ENCODE measurements at regions of chr7 and their contacts with region 1.

Region 1: DNA sequence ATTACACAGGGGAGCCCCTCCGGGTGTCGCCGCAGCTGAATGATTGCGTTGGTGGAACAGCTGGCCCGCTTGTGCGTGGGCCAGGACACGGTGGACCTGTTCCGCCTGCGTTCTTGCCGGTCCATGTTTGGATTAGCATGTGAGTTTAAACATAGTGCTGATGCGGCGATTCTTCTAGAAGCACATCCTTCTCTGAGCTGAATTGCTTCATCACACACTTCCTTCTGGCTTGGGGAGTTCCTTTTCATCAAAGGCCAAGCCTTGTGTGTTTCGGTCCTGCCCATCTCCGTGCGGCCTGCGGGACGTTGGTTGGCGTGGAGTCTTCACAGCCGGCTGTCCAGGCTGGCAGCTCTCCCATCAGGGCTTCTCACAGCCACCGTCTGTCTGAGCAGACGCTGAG is 45.5 kb upstream of the SLC29A4 start:
- DNase-seq: no peak
- ATAC-seq: no peak
- H3K4me3 ChIP-seq: no peak overlapping the region
- H3K27ac ChIP-seq: no peak overlapping the region
- H3K4me1 ChIP-seq: peaks cover 50% of the 10 kb centered on the region
- H3K27me3 ChIP-seq: peaks cover 0 to 1% of the 10 kb centered on the region in 2 experiments; a peak in 1 of 4 replicates
- CTCF ChIP-seq: no peak
- EP300 ChIP-seq: no peak
- POLR2A ChIP-seq: no peak
- RAD21 ChIP-seq: no peak

Region 2: DNA sequence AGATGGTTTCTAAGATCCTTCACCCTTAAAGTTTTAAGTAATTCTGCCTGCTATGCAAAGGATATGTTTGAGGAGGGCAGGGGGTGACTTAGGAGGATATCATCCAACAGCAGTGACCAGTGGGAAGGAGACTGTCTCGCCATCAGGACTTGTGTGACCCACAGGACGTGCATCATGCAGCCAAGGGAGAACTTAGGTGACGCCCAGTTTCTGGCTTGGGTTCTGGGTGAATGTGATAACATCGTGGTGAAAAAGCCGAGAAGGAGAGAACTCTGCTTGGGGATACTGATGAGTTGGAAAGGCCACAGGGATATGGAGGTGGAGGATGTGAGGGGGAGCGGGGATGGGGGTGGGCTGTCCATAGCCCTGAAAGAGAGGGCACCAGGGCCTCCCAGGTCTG is 43.4 kb before region 1 on chr7:
- CTCF ChIA-PET with region 1: interaction called, 8 read pairs
- POLR2A ChIA-PET with region 1: interaction called, 3 read pairs
- RAD21 ChIA-PET with region 1: interaction called, 13 read pairs
- SMC1A ChIA-PET with region 1: interaction called, 12 read pairs
- in situ Hi-C with region 1: no loop called
- intact Hi-C with region 1: loop called (anchors 2 kb)
- DNase-seq: no peak
- ATAC-seq: no peak
- H3K4me3 ChIP-seq: peak overlapping the region; percentile 16; the same call in 1 of the 2 replicates
- H3K27ac ChIP-seq: no peak overlapping the region
- H3K4me1 ChIP-seq: no peaks in the 10 kb centered on the region; the same call in 1 of the 2 replicates
- H3K27me3 ChIP-seq: no peaks in the 10 kb centered on the region
- CTCF ChIP-seq: no peak
- EP300 ChIP-seq: no peak
- POLR2A ChIP-seq: no peak
- RAD21 ChIP-seq: no peak

Region 3: GRCh38 chr7:5284304-5285281 is 47.3 kb after region 1 on chr7:
- CTCF ChIA-PET with region 1: interaction called, 18 read pairs
- POLR2A ChIA-PET with region 1: interaction called, 3 read pairs
- RAD21 ChIA-PET with region 1: interaction called, 12 read pairs
- SMC1A ChIA-PET with region 1: interaction called, 3 read pairs
- in situ Hi-C with region 1: no loop called
- intact Hi-C with region 1: no loop called
- DNase-seq: peak; percentile 4
- ATAC-seq: peak; percentile 85
- H3K4me3 ChIP-seq: no peak overlapping the region
- H3K27ac ChIP-seq: no peak overlapping the region
- H3K4me1 ChIP-seq: no peaks in the 10 kb centered on the region
- H3K27me3 ChIP-seq: no peaks in the 10 kb centered on the region; a peak in 1 of 4 replicates
- CTCF ChIP-seq: peak; percentile 33 to 51 (median 46); a peak in 4 of 6 replicates
- EP300 ChIP-seq: no peak
- POLR2A ChIP-seq: no peak
- RAD21 ChIP-seq: peak; percentile 67

Region 4: DNA sequence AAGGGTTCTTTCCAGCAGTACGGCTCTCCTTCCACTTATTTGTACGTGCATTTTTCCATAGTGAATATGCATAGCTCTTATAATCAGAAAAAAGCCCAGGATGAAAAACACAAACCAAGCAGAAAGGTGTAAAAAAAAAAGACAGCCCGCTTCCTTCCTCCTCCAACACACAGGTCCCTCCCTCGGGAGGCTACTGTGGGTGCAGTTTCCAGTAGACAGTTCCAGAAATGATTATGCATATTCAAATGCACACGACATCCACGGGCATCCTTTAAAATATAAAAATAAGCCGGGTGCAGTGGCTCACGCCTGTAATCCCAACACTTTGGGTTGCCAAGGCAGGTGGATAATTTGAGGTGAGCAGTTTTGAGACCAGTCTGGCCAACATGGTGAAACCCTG is 126.4 kb after region 1 on chr7:
- CTCF ChIA-PET with region 1: interaction called, 46 read pairs
- POLR2A ChIA-PET with region 1: interaction called, 4 read pairs
- RAD21 ChIA-PET with region 1: interaction called, 21 read pairs
- SMC1A ChIA-PET with region 1: interaction called, 9 read pairs
- in situ Hi-C with region 1: no loop called
- intact Hi-C with region 1: loop called (anchors 1 kb)
- DNase-seq: no peak
- ATAC-seq: peak; percentile 38; the same call in 2 of the 3 replicates
- H3K4me3 ChIP-seq: peak overlapping the region; percentile 16; the same call in 1 of the 2 replicates
- H3K27ac ChIP-seq: no peak overlapping the region
- H3K4me1 ChIP-seq: peaks cover 16% of the 10 kb centered on the region
- H3K27me3 ChIP-seq: no peaks in the 10 kb centered on the region
- CTCF ChIP-seq: no peak
- EP300 ChIP-seq: no peak
- POLR2A ChIP-seq: no peak
- RAD21 ChIP-seq: no peak

Region 5: DNA sequence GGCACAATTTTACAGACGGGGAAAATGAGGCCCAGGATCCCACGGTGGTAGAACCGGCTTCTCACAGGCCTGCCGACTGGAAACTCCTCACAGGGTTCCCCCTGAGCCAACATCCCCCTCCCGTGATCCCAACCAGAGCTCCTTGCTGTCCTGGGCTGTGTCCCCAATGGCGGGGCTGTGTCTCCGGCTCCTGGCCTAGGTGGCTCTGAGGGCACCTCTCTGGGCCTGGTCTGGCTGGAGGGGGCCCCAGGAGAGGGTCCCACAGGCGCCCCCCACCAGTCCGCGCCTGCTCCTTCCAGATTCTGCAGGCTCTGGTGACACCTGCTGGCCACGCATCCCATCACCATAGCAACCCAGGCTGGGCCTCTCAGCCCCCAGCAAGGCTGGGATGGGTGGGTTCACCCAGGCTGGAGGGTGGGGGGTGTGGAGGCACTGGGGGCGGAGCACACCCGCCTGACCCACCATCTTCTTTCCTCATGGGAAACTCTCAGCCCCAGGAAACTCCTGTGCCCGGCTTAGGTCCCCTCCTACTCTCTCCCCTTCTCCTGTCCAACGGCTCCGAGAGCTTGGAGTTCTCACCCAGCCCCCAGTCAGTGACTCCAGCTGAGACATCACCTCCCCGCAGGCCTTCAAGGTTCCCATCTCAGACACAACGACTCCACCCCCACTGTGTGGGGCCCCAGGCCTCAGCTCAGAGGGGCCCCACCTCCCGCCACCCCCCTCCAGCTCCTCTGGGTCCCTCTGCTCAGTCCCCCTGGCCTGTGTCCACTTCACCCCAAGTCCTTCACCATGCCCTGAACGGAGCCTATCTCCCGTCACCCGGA is 213.5 kb after region 1 on chr7:
- CTCF ChIA-PET with region 1: interaction called, 68 read pairs
- POLR2A ChIA-PET with region 1: no interaction called
- RAD21 ChIA-PET with region 1: interaction called, 45 read pairs
- SMC1A ChIA-PET with region 1: interaction called, 22 read pairs
- in situ Hi-C with region 1: no loop called
- intact Hi-C with region 1: loop called (anchors 1 kb)
- DNase-seq: no peak
- ATAC-seq: peak; percentile 92
- H3K4me3 ChIP-seq: no peak overlapping the region
- H3K27ac ChIP-seq: no peak overlapping the region
- H3K4me1 ChIP-seq: no peaks in the 10 kb centered on the region
- H3K27me3 ChIP-seq: no peaks in the 10 kb centered on the region; a peak in 1 of 4 replicates
- CTCF ChIP-seq: peak; percentile 48 to 70 (median 61)
- EP300 ChIP-seq: no peak
- POLR2A ChIP-seq: no peak
- RAD21 ChIP-seq: peak; percentile 74